ENCODE measurements at regions of chr5 and their contacts with region 1.

Region 1: DNA sequence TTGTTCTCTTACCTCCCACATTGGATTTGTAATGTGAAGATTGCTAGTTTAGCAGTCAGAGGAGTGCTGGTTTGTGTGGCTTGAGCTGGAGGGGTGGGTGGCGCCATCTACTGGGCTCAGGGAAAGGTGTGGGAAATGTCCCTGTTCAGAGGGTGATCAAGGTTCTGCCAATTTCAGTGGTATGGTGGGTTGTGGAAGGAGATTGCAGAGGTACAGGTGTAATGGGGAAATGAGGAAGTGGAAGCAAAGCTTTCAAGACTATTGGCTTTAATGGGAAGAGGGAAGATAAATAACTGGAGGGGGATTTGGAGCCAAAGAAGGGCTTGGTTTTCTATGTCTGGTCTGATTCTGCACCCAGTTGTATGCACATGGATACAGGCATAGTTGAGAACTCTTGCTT is 76.4 kb downstream of the OSMR start:
- DNase-seq: no peak
- H3K4me3 ChIP-seq: no peak overlapping the region
- H3K27ac ChIP-seq: no peak overlapping the region
- H3K4me1 ChIP-seq: peaks cover 5 to 8% of the 10 kb centered on the region in 2 donors
- H3K27me3 ChIP-seq: no peaks in the 10 kb centered on the region
- CTCF ChIP-seq: peak; percentile 34 to 69 (median 63)

Region 2: DNA sequence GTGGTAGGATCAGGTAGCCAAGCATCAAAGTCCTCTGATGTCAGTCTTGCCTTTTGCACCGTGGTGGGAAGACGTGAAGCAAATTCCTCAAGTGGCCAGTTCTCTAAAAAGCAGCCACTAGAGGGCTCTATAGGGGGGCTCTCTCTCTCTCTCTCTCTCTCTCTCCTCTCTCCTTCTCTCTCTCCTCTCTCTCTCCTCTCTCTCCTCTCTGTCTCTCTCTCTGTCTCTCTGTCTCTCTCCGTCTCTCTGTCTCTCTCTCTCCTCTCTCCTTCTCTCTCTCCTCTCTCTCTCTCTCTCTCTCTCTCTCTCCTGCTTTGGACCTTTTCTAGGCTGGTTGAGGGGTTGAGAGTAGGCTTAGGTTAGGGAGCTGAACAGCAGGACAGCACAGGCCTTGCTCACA is 90.3 kb before region 1 on chr5:
- intact Hi-C with region 1: loop called (anchors 1 kb)
- DNase-seq: no peak
- H3K4me3 ChIP-seq: no peak overlapping the region
- H3K27ac ChIP-seq: no peak overlapping the region
- H3K4me1 ChIP-seq: peaks cover 0 to 3% of the 10 kb centered on the region in 2 donors
- H3K27me3 ChIP-seq: no peaks in the 10 kb centered on the region
- CTCF ChIP-seq: peak in 2 of 3 experiments; percentile 50 to 53

Region 3: GRCh38 chr5:39005566-39006232 is 83.5 kb after region 1 on chr5:
- intact Hi-C with region 1: no loop called
- DNase-seq: no peak
- H3K4me3 ChIP-seq: no peak overlapping the region
- H3K27ac ChIP-seq: no peak overlapping the region
- H3K4me1 ChIP-seq: no peaks in the 10 kb centered on the region
- H3K27me3 ChIP-seq: no peaks in the 10 kb centered on the region
- CTCF ChIP-seq: peak in 2 of 3 experiments; percentile 21 to 49

Region 4: DNA sequence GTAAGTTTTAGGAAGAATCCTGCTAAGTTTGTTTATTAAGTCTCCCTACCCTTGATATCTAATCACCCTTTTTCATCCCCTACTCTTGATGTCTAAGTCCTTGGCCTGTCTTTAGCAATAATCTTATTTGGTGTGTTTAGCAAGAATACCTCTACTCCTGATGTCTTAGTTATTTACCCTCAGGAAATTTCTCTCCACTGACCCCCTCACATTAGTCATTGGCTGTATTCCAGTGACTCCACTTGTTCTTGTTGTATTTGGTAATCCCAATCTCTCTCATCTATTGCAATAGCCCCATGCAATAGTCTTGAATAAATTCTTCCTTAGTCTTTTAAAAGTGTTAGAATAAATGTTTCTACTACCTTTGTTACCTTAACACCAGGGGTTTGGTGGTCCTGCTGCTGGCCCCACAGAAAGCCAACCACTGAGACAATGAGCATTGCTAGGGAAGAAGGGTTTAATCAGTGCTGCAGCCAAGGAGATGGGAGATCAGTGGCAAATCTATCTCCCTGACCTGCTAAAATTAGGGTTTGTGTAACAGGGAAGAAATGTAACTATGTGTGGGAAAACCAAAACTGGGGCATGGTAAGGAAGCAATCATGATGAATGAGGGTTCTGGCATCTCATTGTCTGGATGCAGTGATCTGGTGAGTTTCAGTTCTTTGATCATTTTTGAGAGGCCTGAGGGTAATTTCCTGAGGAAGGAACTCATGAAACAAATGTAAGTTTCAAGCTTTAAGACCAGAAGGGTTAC is 739.0 kb after region 1 on chr5:
- intact Hi-C with region 1: no loop called
- DNase-seq: no peak
- H3K4me3 ChIP-seq: no peak overlapping the region
- H3K27ac ChIP-seq: no peak overlapping the region
- H3K4me1 ChIP-seq: no peaks in the 10 kb centered on the region
- H3K27me3 ChIP-seq: no peaks in the 10 kb centered on the region
- CTCF ChIP-seq: no peak

Measured in ascending aorta (tissue), 2 donors.